H1 (cell line): ENCODE measurements at regions of chr20 and their contacts with region 1.

Region 1: DNA sequence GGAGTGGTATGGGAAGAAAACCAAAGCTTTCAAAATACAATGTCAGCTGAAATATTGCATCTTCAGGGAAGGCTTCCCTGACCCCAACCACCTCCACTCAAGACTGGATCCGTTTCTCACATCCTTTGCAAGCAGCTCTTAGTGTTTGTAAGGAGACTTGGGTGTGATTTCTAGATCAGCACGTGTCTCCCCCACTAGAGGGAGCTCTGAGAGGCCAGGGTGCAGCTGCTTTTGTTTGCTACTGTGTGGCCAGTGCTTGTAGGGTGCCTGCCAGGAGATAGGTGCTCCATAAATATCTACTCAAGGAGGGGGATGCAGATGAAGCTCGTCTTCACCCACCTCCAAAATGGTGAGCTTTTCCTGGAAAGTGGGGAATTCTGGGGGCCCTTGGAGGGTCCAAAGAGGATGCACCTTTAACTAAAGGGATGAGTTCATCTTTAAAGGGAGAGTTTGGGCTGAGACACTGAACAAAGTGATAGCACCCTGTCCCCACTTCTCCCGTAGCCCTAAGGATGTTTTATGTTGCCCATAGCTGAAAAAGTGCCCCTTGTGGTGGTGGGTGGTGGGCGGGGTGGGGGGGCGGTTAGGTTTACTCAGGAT is 52.6 kb upstream of the MAFB start:
- DNase-seq: peak; percentile 34 to 76
- H3K4me3 ChIP-seq: no peak overlapping the region
- H3K27ac ChIP-seq: no peak overlapping the region
- H3K4me1 ChIP-seq: peaks cover 0 to 3% (median 1%) of the 10 kb centered on the region in 4 experiments; a peak in 2 of 7 replicates
- H3K27me3 ChIP-seq: no peaks in the 10 kb centered on the region
- CTCF ChIP-seq: peak; percentile 70 to 86 (median 78)
- EP300 ChIP-seq: no peak
- POLR2A ChIP-seq: no peak
- RAD21 ChIP-seq: peak; percentile 61 to 71

Region 2: GRCh38 chr20:40463171-40463570 is 278.4 kb before region 1 on chr20:
- CTCF ChIA-PET with region 1: no interaction called
- POLR2A ChIA-PET with region 1: no interaction called
- DNase-seq: no peak
- H3K4me3 ChIP-seq: no peak overlapping the region
- H3K27ac ChIP-seq: no peak overlapping the region
- H3K4me1 ChIP-seq: no peaks in the 10 kb centered on the region
- H3K27me3 ChIP-seq: no peaks in the 10 kb centered on the region
- CTCF ChIP-seq: no peak
- EP300 ChIP-seq: no peak
- POLR2A ChIP-seq: no peak
- RAD21 ChIP-seq: no peak

Region 3: DNA sequence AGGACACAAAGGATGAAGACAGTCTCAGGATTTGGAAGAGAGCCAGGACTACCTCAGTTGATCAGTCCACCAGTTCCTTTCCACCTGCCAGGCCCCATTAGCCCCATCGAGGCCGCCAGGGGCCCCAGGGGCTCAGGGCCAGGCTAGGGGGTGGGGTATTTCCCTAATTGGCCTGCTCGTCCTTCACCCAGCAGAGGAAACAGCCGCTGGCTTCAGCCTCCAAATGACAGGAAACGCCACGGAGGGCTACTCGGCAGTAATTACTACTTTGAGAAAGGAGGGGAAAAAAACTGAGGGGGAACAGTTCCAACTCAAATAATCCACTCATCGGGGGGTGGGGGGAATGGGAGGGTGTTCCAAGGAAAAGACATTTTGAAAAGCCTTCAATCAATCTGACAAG is 95.2 kb before region 1 on chr20:
- CTCF ChIA-PET with region 1: no interaction called
- POLR2A ChIA-PET with region 1: no interaction called
- DNase-seq: no peak
- H3K4me3 ChIP-seq: no peak overlapping the region
- H3K27ac ChIP-seq: no peak overlapping the region
- H3K4me1 ChIP-seq: no peaks in the 10 kb centered on the region; a peak in 1 of 7 replicates
- H3K27me3 ChIP-seq: no peaks in the 10 kb centered on the region
- CTCF ChIP-seq: no peak
- EP300 ChIP-seq: no peak
- POLR2A ChIP-seq: no peak
- RAD21 ChIP-seq: no peak

Region 4: DNA sequence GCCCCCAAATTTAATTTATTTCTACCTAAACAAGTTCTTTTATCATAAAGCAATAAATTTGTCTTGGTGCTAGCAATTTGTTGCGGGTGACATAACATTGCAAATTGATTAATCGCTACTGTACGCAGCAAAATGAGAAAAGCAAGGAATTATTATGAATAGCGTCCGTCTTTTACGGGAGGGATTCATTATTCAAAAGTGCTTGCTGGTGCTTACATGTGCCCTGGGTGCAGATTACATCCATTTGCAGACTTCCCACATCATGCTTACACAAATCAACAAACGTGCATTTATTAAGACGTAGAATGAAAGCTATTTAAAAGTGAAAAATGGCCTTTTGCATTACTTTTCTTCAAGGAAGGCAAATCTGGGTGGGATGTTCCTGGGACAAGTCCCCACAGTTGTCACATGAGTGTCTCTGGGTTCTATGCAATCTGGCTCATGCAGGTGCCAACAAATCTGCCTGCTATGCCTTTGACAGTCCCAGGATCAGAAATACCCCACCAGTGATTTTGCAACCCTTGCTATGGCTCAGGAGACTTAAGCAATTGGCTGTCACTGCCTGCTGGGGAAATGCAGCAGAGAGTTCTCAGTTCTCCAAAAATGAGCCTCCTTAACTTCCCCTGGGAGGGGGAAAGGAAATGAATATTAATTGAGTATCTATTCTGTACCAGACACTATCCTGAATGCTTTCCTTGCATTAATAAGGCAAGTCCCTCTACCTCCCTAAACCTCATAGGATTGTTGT is 22.5 kb before region 1 on chr20:
- CTCF ChIA-PET with region 1: interaction called, 10 read pairs
- POLR2A ChIA-PET with region 1: no interaction called
- DNase-seq: no peak
- H3K4me3 ChIP-seq: no peak overlapping the region
- H3K27ac ChIP-seq: no peak overlapping the region
- H3K4me1 ChIP-seq: no peaks in the 10 kb centered on the region
- H3K27me3 ChIP-seq: no peaks in the 10 kb centered on the region
- CTCF ChIP-seq: no peak
- EP300 ChIP-seq: no peak
- POLR2A ChIP-seq: no peak
- RAD21 ChIP-seq: no peak

Region 5: GRCh38 chr20:40781327-40782042 is 39.9 kb after region 1 on chr20:
- CTCF ChIA-PET with region 1: interaction called, 12 read pairs
- POLR2A ChIA-PET with region 1: no interaction called
- DNase-seq: no peak
- H3K4me3 ChIP-seq: no peak overlapping the region
- H3K27ac ChIP-seq: no peak overlapping the region
- H3K4me1 ChIP-seq: 0 out of 7 replicates have a peak, but pooled peaks cover 0 to 3% (median 0%) of the 10 kb centered on the region in 4 experiments
- H3K27me3 ChIP-seq: no peaks in the 10 kb centered on the region; a peak in 1 of 7 replicates
- CTCF ChIP-seq: no peak
- EP300 ChIP-seq: no peak
- POLR2A ChIP-seq: no peak
- RAD21 ChIP-seq: no peak

Region 6: GRCh38 chr20:40938020-40938419 is 196.4 kb after region 1 on chr20:
- CTCF ChIA-PET with region 1: interaction called, 22 read pairs
- POLR2A ChIA-PET with region 1: no interaction called
- DNase-seq: peak in 1 of 2 experiments; percentile 68
- H3K4me3 ChIP-seq: no peak overlapping the region
- H3K27ac ChIP-seq: no peak overlapping the region
- H3K4me1 ChIP-seq: no peaks in the 10 kb centered on the region
- H3K27me3 ChIP-seq: no peaks in the 10 kb centered on the region
- CTCF ChIP-seq: peak; percentile 53 to 68 (median 59)
- EP300 ChIP-seq: no peak
- POLR2A ChIP-seq: no peak
- RAD21 ChIP-seq: peak; percentile 50 to 65; a peak in 3 of 4 replicates

Region 7: DNA sequence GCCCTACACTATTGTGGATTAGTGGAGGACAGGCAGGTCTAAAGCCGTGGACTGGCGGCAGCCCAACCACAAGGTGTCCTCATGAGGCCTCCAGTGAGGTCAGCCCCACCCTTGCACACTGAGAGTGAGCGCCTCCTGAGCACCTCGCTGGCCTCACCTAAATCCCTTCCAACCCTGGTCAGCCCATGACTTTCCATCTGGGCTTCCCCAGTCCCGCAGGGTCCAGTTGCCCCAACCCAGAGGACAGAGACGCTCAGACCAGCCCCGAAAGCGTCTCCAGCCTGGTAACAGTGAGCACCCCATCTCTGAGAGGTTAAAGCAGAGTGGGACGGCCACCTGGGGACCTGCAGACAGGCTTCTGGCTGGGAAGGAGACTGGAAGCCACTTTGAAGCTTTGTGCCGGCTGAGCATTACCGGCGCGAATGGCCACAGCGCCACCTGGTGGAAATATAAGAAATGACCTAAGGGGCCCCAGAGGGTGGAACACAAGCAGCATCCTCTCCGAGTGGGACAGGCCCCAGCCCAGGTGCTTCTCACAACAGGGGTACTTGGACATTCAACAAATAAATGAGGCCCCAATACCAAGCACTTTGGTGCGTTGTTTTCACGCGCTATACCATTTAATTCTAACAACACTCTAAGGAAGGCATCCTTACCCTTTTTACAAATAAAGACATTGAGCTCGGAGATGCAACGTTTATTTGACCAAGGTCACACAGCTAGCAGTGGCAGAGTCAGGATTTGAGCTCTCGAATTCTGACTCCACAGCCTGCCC is 221.3 kb after region 1 on chr20:
- CTCF ChIA-PET with region 1: interaction called, 24 read pairs
- POLR2A ChIA-PET with region 1: interaction called, 3 read pairs
- DNase-seq: peak; percentile 33 to 91
- H3K4me3 ChIP-seq: no peak overlapping the region
- H3K27ac ChIP-seq: no peak overlapping the region
- H3K4me1 ChIP-seq: no peaks in the 10 kb centered on the region; a peak in 1 of 7 replicates
- H3K27me3 ChIP-seq: no peaks in the 10 kb centered on the region
- CTCF ChIP-seq: peak; percentile 77 to 86 (median 78)
- EP300 ChIP-seq: no peak
- POLR2A ChIP-seq: no peak
- RAD21 ChIP-seq: peak; percentile 92 to 96